ENCODE measurements at regions of chr4 and their contacts with region 1.

Region 1: DNA sequence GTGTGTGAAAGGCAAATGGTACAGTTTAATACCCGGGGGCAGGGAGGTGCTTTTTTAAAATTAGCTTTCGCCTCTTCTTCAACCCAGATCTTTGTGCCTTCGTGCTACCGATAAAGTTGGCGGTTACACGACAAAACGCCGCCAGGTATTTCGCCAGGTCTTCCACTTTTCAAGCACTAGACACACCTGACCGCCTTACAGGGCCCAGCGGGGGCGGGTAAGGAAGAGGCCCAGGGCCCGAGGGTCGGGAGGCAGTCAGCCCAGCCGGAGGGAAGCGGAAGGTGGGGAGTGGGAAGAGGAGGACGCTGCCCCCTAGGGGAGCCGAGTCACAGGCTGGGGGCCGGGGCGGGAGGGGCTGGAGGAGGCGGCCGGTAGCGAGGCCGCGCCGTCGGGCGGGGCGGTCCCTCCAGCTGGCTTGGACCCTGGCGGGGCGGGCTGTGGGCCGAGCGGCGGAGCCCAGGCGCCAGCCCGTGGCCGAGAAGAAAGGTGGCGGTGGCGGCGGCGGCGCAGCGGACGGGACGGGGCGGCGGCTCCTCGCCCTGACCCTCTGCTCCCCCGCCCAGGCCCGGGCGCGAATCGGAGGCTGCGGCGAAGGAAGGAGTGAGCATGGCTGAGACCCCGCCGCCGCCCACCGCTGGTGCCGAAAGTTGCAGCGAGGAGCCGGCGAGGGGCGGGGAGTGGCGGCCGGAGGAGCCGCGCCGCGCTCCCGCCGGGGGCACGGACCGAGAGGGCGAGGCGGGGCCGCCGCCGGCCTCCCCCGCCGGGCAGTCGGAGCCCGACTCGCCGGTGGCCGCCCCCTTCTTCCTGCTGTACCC is 16.2 kb downstream of the UTP3 start:
- DNase-seq: peak; percentile 88
- ATAC-seq: peak; percentile 89

Region 2: GRCh38 chr4:70637239-70637913 is 67.2 kb before region 1 on chr4:
- intact Hi-C with region 1: no loop called
- DNase-seq: no peak
- ATAC-seq: peak; percentile 42

Region 3: DNA sequence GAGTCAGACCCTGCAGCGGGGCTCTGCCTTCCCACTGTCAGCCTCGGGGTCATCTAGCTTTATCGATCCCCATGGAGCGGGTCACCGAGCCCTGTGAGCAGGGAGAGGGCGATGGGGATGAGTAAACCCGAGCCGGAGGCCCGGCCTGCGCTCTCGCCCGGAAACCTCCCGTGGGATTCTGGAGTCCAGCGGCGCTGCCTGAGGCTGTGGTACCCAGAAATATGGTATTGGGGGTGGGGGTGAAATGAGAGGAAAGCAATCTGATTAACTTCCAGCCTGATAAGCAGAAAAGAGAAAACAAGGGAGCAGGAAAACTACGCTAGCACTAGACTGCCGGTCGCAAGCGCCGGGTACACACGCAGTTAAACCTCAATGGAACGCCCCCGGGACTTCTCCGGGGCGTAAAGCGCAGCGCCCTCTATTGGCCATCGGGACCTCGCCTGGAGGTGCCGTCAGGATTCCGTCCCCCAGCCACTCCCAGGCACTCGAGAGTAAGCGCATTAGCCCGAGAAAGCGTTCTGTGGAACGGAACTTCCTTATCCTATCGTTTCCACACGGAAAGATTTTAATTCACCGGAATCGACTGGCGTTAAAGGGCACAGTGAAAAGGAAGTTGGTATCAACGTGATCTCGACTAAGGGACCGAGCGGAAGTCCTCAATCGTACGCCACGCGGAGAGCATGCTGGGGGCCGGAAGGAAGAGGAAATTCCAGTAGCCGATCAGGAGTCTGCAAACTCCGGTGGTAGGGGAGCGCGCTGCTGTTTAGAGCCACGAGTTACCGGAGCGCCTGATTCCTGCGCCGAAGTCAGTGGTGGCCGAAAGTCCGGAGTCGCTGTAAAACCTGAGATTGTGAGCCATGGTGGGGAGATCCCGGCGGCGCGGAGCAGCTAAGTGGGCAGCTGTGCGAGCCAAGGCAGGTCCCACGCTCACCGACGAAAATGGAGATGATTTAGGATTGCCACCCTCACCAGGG is 16.4 kb before region 1 on chr4 and contains the start of gene UTP3:
- intact Hi-C with region 1: loop called (anchors 1 kb)
- DNase-seq: peak; percentile 95
- ATAC-seq: peak; percentile 98
- total RNA-seq, gene UTP3: 14.8 TPM

Region 4: GRCh38 chr4:70895405-70895804 is 190.9 kb after region 1 on chr4:
- intact Hi-C with region 1: no loop called
- DNase-seq: no peak
- ATAC-seq: peak; percentile 85

Region 5: GRCh38 chr4:70993181-70994068 is 288.9 kb after region 1 on chr4 and contains the start of gene DCK:
- intact Hi-C with region 1: loop called (anchors 5 kb)
- DNase-seq: peak; percentile 96
- ATAC-seq: peak; percentile 99
- total RNA-seq, gene DCK: 7.2 TPM